Activated CD8-positive, alpha-beta T cell treated with anti-CD3 and anti-CD28 coated beads for 36 hours (primary cell): ENCODE measurements at regions of chr11 and their contacts with region 1.

Region 1: DNA sequence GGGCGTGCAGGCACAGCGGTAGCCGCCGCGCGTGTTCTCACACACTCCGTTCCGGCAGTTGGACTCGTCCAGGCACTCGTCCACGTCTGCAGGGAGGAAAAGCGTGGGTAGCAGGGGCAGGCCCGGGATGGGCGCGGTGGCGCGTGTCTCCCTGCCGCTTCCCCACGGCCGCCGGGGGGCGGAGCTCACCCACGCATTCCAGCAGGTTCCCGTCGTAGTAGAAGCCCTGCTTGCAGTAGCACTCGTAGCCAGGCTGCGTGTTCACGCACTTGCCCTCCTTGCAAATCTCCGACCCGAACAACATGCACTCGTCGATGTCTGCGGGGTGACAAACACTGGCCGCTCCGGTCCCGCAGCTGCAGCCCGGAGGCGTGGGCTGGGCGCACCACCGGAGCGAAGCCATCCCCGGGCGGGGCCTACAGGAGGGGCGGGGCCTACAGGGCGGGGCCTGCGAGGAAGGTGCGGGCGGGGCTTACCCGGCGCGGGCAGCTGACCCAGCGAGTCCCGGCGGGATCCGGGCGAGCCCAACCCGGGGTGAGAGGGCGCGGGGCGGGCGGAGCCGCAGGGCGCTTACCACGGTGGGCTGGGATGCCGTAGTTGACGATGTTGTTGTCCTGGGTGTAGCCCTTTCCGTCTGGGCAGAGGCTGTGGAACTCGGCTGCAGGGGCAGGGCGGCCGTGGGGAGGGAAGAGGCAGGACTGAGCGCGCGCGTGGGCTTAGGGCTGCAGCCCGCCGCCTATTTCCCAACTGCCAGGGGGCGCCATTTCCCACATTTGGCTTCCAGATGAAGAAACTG is 15.6 kb downstream of the SCYL1 start:
- DNase-seq: peak; percentile 92
- ATAC-seq: peak; percentile 93
- H3K4me3 Mint-ChIP-seq: peak overlapping the region; percentile 76
- H3K27ac Mint-ChIP-seq: peak overlapping the region; percentile 86
- H3K4me1 Mint-ChIP-seq: peaks cover 22% of the 10 kb centered on the region
- H3K27me3 Mint-ChIP-seq: no peaks in the 10 kb centered on the region
- CTCF ChIP-seq: peak; percentile 75

Region 2: GRCh38 chr11:65530157-65530496 is 10.4 kb before region 1 on chr11:
- CTCF ChIA-PET with region 1: interaction called, 47 read pairs
- POLR2A ChIA-PET with region 1: interaction called, 18 read pairs
- intact Hi-C with region 1: no loop called
- DNase-seq: peak; percentile 66
- ATAC-seq: peak; percentile 85
- H3K4me3 Mint-ChIP-seq: no peak overlapping the region
- H3K27ac Mint-ChIP-seq: peak overlapping the region; percentile 75
- H3K4me1 Mint-ChIP-seq: peaks cover 34% of the 10 kb centered on the region
- H3K27me3 Mint-ChIP-seq: no peaks in the 10 kb centered on the region
- CTCF ChIP-seq: peak; percentile 24

Region 3: DNA sequence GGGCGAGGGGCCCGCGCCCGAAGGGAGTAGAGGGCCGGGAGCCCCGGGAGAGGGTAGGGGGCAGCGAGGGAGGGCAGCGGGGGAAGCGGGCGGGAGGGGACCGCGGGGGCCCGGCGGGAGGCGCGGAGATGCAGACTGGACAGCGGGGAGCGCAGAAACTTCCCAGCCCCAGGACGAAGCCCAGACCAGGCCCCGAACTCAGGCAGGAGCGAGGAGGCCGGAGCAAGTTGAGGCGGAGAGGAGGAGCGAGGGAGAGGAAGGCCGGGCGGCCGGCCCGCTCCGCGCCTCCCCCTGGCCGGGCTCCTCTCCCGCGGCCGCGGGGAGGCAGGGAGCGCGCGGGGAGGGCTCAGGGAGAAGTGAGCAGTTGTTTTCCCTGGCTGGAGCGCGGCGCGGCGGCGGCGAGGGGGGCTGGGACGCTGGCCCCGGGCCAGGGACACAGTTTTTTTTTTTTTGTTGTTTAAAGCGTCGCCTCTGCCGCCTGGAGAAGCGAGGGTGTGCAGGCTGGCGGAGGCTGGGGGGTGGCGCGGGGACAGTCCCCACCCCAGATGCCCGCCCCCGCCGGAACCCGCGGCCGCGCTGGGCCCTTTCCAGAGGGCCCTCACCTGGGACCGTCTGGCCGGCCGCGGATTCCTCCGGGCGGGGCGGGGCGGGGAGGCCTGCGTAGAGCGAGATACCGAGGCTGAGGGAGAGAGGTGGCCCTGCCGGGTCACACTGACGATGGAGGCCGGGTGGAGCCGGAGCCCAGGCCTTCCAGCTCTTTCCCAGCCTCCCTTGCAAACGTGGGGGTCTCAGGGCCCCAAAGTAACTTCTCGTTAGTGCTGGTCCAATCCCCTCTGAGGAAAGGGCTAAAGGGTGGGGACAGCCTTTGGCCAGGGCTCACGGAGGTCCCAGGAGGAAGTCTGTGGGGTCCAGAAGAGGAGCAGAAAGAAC is 17.8 kb after region 1 on chr11 and contains the start of gene LTBP3:
- CTCF ChIA-PET with region 1: interaction called, 46 read pairs
- POLR2A ChIA-PET with region 1: interaction called, 26 read pairs
- intact Hi-C with region 1: no loop called
- DNase-seq: peak; percentile 63
- ATAC-seq: peak; percentile 24
- H3K4me3 Mint-ChIP-seq: peak within 1 kb of the TSS; percentile 87
- H3K27ac Mint-ChIP-seq: peak within 1 kb of the TSS; percentile 90
- H3K4me1 Mint-ChIP-seq: peaks cover 60% of the 10 kb centered on the region
- H3K27me3 Mint-ChIP-seq: no peaks in the 10 kb centered on the region
- CTCF ChIP-seq: no peak
- total RNA-seq, gene LTBP3: 55.4 to 56.0 TPM

Region 4: GRCh38 chr11:65575568-65576231 is 35.2 kb after region 1 on chr11 and contains the start of gene EHBP1L1:
- CTCF ChIA-PET with region 1: interaction called, 59 read pairs
- POLR2A ChIA-PET with region 1: interaction called, 25 read pairs
- intact Hi-C with region 1: loop called (anchors 5 kb)
- DNase-seq: peak; percentile 88
- ATAC-seq: peak; percentile 27
- H3K4me3 Mint-ChIP-seq: peak within 1 kb of the TSS; percentile 90
- H3K27ac Mint-ChIP-seq: peak within 1 kb of the TSS; percentile 91
- H3K4me1 Mint-ChIP-seq: peaks cover 56% of the 10 kb centered on the region
- H3K27me3 Mint-ChIP-seq: no peaks in the 10 kb centered on the region
- CTCF ChIP-seq: no peak
- total RNA-seq, gene EHBP1L1: 94.0 to 99.4 TPM

Region 5: DNA sequence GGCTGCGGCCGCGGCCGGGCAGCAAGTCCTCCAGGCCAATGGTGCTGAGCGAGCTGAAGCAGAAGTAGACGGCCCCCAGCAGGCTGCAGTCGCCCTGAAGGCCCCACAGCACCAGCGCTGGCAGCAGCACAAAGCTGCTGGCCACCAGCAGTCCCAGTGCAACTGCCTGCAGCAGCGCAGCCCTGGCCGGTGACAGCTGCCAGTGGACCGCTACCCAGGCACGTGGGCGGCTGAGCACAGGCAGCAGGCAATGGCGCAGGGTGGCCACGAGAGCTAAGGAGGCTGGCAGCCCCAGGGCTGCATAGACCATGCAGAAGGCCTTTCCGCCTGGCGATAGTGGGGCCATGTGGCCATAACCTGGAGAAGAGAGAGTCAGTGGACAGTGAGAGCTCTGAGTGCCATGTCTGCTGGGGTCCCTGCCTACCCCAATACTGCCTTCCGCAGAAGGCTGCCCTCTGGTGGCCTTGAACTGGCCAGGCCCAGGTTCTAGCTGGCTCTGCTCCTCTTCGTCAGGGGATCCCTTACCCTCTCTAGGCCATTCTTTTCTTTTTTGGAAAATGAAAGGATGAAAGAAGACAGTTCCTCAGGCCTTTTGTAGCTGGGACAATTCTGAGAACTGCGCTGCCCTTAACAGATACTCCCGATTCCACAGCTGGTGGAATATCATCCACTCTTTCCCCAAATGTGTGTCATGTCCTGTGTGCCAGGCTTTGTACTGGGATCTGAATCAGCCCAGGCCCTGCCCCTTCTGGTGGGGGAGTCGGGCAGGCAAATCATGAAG is 53.2 kb after region 1 on chr11:
- CTCF ChIA-PET with region 1: interaction called, 54 read pairs
- POLR2A ChIA-PET with region 1: interaction called, 13 read pairs
- intact Hi-C with region 1: no loop called
- DNase-seq: peak; percentile 73
- ATAC-seq: peak; percentile 24
- H3K4me3 Mint-ChIP-seq: no peak overlapping the region
- H3K27ac Mint-ChIP-seq: no peak overlapping the region
- H3K4me1 Mint-ChIP-seq: peaks cover 29% of the 10 kb centered on the region
- H3K27me3 Mint-ChIP-seq: no peaks in the 10 kb centered on the region
- CTCF ChIP-seq: peak; percentile 80